Activated naive CD4-positive, alpha-beta T cell treated with anti-CD3 and anti-CD28 coated beads for 36 hours (primary cell): ENCODE measurements at regions of chr13 and their contacts with region 1.

Region 1: GRCh38 chr13:24512197-24512907 is at the start of gene PARP4:
- DNase-seq: peak; percentile 72
- H3K4me3 Mint-ChIP-seq: peak within 1 kb of the TSS; percentile 87
- H3K27ac Mint-ChIP-seq: peak within 1 kb of the TSS; percentile 96
- H3K4me1 Mint-ChIP-seq: peaks cover 28% of the 10 kb centered on the region
- H3K27me3 Mint-ChIP-seq: peaks cover 4% of the 10 kb centered on the region
- total RNA-seq, gene PARP4: 10.1 to 10.9 TPM

Region 2: DNA sequence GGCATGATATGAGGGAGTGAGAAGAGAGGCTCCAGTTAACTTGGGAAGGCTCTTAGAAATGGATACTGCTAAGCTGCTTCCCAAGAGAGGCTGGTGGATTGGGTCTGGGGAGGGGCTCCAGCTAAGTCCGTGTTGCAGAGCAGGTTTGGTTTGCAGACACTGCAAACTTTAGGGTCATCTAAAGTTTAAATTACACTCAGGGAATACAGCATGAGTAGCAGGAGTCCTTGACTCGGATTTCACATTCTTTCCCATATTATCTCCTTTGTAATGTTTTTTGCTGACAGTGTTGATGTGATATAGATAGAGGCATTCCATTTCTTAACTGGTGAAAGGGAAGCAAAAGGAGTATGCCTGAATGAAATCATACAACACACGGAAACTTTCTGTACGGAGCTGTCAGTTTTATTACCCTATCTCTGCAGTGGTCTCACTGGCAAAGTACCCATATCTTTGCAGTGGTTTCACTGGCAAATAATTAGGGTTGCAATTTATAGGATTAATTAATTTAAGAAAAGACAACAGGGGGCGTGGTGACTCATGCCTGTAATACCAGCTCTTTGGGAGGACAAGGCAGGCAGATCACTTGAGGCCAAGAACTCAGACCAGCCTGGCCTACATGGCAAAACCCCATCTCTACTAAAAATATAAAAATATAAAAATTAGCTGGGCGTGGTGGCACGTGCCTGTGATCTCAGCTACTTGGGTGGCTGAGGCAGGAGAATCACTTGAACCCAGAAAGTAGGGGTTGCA is 1299.5 kb before region 1 on chr13:
- CTCF ChIA-PET with region 1: no interaction called
- intact Hi-C with region 1: no loop called
- DNase-seq: no peak
- H3K4me3 Mint-ChIP-seq: no peak overlapping the region
- H3K27ac Mint-ChIP-seq: no peak overlapping the region
- H3K4me1 Mint-ChIP-seq: no peaks in the 10 kb centered on the region
- H3K27me3 Mint-ChIP-seq: peaks cover 3% of the 10 kb centered on the region

Region 3: DNA sequence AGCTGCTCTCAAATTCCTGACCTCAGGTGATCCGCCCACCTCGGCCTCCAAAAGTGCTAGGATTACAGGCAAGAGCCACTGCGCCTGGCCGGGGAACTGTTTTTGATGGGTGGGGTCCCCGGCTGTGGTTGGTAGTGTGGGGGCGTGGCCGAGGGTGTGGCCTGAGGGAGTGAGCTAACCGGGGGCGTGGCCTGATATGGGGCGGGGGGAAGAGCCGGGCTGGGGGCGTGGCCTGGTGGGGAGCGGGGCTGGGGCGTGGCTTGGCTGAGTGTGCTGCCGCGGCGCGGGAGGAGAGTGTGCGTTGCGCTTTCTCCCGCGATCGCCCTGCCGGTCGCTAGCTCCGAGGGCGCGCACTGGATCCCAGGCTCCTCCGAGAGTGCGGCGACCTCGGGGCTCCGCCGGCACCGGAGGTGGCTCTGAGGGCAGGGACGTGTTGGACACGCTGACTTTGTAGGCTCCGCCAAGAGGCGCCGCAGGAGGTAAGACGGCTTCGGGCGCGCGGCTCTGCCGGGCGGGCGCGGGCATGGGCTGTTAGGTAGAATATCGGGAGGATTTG is 351.8 kb before region 1 on chr13 and contains the start of gene SPATA13:
- CTCF ChIA-PET with region 1: no interaction called
- intact Hi-C with region 1: loop called (anchors 2 kb)
- DNase-seq: peak; percentile 95
- H3K4me3 Mint-ChIP-seq: peak within 1 kb of the TSS; percentile 86
- H3K27ac Mint-ChIP-seq: no peak within 1 kb of the TSS
- H3K4me1 Mint-ChIP-seq: peaks cover 12% of the 10 kb centered on the region
- H3K27me3 Mint-ChIP-seq: peaks cover 8% of the 10 kb centered on the region
- total RNA-seq, gene SPATA13: 56.8 to 57.4 TPM

Region 4: DNA sequence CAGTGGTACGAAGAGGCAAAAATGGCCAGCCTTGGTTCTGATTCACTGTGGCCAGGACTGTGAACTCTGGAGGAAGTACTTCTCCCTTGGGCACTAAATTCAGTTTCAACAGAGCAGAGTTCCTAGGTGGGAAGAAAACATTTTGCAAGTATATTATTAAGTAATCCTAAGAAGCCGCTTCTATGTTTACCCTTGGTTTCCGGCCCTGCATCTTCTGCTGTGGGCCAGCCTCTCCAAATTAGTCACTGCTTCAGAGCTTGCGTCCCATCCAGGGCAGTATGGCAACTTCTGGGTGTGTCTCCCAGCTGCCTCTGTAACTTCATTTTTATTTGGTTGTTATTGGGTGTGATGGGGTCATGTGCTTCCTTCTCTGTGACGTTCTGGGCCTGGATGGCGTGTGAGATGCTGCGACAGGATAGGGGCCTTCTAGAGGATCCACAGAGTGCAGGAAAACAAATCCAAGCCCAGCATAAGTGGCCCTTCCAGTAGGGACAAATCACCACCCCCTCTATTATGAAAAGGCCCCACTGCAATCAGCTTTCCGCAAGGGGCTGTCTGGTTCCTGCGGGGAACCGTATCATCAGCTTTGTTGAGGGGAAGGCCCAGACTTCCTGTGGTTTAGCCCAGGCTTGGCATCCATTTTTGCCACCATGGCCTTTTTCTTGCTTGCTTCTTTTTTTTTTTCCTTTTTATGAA is 258.1 kb before region 1 on chr13:
- CTCF ChIA-PET with region 1: no interaction called
- intact Hi-C with region 1: loop called (anchors 1 kb)
- DNase-seq: peak; percentile 79
- H3K4me3 Mint-ChIP-seq: peak overlapping the region; percentile 87
- H3K27ac Mint-ChIP-seq: peak overlapping the region; percentile 96
- H3K4me1 Mint-ChIP-seq: peaks cover 77% of the 10 kb centered on the region
- H3K27me3 Mint-ChIP-seq: no peaks in the 10 kb centered on the region

Region 5: GRCh38 chr13:24459234-24459633 is 53.1 kb before region 1 on chr13:
- CTCF ChIA-PET with region 1: no interaction called
- intact Hi-C with region 1: loop called (anchors 1 kb)
- DNase-seq: peak; percentile 44
- H3K4me3 Mint-ChIP-seq: no peak overlapping the region
- H3K27ac Mint-ChIP-seq: no peak overlapping the region
- H3K4me1 Mint-ChIP-seq: peaks cover 10% of the 10 kb centered on the region
- H3K27me3 Mint-ChIP-seq: no peaks in the 10 kb centered on the region

Region 6: GRCh38 chr13:24618014-24618955 is 105.9 kb after region 1 on chr13:
- CTCF ChIA-PET with region 1: no interaction called
- intact Hi-C with region 1: loop called (anchors 1 kb)
- DNase-seq: peak; percentile 86
- H3K4me3 Mint-ChIP-seq: no peak overlapping the region
- H3K27ac Mint-ChIP-seq: peak overlapping the region; percentile 66
- H3K4me1 Mint-ChIP-seq: peaks cover 25% of the 10 kb centered on the region
- H3K27me3 Mint-ChIP-seq: no peaks in the 10 kb centered on the region

Region 7: DNA sequence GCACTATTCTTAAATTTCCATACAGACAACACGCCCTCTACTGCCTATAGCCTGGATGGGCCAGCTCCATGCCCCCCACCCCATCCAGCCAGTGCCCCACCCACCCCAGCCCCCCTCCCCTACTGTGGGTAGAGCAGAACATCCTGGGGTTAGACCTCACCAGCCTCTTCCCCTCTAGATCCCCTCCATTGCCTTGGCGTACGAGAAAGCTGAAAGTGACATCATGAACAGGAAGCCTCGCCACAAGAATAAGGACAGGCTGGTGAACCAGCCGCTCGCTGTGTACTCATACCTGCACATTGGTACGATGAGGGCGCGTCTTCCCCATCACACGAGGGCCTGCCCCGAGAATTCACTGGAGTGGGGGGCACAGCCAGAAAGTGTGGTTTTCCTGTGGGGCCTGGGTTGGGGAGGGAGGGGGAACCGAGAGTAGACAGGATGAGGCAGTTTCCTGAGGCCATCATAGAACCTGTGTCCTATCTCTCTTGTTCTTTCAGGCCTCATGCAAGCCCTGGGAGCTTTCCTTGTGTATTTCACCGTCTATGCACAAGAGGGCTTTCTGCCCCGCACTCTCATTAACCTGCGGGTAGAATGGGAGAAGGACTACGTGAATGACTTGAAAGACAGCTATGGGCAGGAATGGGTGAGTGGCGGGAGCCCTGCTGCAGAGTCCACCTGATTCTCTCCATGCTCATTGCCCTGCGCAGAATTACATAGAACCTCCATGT is 197.0 kb after region 1 on chr13:
- CTCF ChIA-PET with region 1: no interaction called
- intact Hi-C with region 1: loop called (anchors 1 kb)
- DNase-seq: peak; percentile 91
- H3K4me3 Mint-ChIP-seq: peak overlapping the region; percentile 17
- H3K27ac Mint-ChIP-seq: peak overlapping the region; percentile 28
- H3K4me1 Mint-ChIP-seq: peaks cover 17% of the 10 kb centered on the region
- H3K27me3 Mint-ChIP-seq: no peaks in the 10 kb centered on the region

Region 8: GRCh38 chr13:25281193-25281934 is 769.0 kb after region 1 on chr13:
- CTCF ChIA-PET with region 1: no interaction called
- intact Hi-C with region 1: loop called (anchors 5 kb)
- DNase-seq: peak; percentile 65
- H3K4me3 Mint-ChIP-seq: peak overlapping the region; percentile 34
- H3K27ac Mint-ChIP-seq: peak overlapping the region; percentile 78
- H3K4me1 Mint-ChIP-seq: peaks cover 82% of the 10 kb centered on the region
- H3K27me3 Mint-ChIP-seq: no peaks in the 10 kb centered on the region